ENCODE measurements at regions of chrX and their contacts with region 1.

Region 1: GRCh38 chrX:103637604-103638338 is 9.0 kb downstream of the TCEAL1 start:
- DNase-seq: no peak
- H3K4me3 ChIP-seq: no peak overlapping the region
- H3K27ac ChIP-seq: no peak overlapping the region
- H3K4me1 ChIP-seq: no peaks in the 10 kb centered on the region
- H3K27me3 ChIP-seq: no peaks in the 10 kb centered on the region
- CTCF ChIP-seq: no peak
- EP300 ChIP-seq: no peak
- POLR2A ChIP-seq: no peak

Region 2: DNA sequence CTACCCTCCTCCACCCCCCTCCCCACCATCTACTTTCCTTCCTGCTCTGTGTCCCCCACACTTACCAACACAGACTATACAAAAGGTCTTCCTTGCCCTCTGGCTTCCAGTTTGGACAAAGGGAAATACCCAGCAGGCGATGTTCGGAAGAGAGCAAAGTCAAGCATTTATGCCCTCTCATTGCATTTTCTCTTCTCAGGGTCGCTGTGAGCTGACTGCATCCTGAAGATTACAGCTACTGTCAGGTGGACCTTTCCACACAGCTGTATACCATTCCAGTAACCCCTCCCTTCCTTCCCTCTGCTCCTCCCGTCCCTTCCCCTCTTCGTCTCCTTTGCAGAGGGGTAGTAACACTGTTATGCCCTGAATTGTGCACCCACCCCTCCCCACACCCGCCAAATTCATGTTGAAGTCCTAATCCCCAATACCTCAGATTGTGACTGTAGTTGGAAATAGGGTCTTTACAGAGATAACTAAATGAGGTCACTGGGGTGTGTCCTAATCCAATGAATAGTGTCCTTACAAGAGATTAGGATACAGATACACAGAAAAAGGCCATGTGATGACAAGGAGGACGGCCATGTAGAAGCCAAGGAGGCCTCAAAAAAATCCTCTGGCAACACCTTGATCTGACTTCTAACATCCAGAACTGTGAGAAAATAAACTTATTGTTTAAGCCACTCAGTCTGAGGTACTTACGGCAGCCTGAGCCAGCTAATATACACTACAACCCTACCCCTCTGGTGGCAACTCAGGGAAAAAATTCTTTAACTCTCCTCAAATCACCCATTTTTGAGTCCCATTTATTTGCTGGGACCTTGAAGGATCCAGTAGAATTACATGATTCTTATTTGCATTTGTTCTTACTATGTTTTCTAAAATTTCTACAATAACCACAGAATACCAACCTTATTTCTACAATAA is 37.0 kb after region 1 on chrX:
- intact Hi-C with region 1: loop called (anchors 5 kb)
- DNase-seq: no peak
- H3K4me3 ChIP-seq: no peak overlapping the region
- H3K27ac ChIP-seq: no peak overlapping the region
- H3K4me1 ChIP-seq: peaks cover 0 to 12% (median 3%) of the 10 kb centered on the region in 4 donors
- H3K27me3 ChIP-seq: peaks cover 0 to 5% (median 0%) of the 10 kb centered on the region in 4 donors
- CTCF ChIP-seq: no peak
- EP300 ChIP-seq: no peak
- POLR2A ChIP-seq: no peak

Measured in esophagus muscularis mucosa (tissue), 4 donors.